Activated CD4-positive, alpha-beta memory T cell treated with anti-CD3 and anti-CD28 coated beads for 36 hours (primary cell): ENCODE measurements at regions of chr1 and their contacts with region 1.

Region 1: GRCh38 chr1:205227584-205228006 is at the start of gene TMCC2:
- DNase-seq: peak; percentile 88
- H3K4me3 Mint-ChIP-seq: peak within 1 kb of the TSS; percentile 84
- H3K27ac Mint-ChIP-seq: no peak within 1 kb of the TSS
- H3K4me1 Mint-ChIP-seq: peaks cover 34% of the 10 kb centered on the region
- H3K27me3 Mint-ChIP-seq: peaks cover 10% of the 10 kb centered on the region
- total RNA-seq, gene TMCC2: 9.8 to 10.1 TPM

Region 2: DNA sequence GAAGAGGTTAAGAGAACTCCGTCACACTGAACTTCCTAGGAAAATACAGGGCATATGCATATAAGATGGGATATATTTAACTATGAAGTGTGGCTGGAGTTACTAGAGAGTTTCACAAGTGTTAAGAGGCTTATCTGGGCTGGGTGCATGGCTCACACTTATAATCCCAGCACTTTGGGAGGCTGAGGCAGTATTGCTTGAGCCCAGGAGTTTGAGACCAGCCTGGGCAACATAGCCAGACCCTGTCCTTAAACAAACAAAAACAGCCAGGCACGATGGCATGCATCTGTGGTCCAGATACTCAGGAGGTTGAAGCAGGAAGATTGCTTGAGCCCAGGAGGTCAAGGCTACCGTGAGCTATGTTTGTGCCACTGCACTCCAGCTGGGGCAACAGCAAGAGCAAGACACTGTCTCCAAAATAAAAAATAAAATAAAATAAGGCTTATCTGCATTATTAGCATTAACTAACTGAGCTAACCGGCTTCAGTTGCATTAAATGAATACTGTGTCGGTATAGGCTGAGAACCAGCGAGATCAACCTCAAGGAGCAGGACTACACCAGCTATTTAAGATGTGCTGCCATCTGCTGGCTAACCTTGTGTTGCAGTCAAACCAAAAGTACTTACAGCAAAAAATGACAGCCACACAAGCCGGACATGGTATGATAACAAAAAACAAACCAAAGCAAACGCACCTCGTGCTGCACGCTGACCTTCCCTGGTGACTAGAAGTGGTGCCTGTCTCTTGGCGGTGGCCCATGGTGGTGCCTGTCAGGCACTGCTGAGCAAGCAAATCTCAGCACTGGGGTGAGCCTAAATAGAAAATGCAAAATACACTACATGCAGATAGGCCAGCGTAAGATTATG is 86.1 kb before region 1 on chr1:
- CTCF ChIA-PET with region 1: interaction called, 14 read pairs
- POLR2A ChIA-PET with region 1: no interaction called
- intact Hi-C with region 1: no loop called
- DNase-seq: peak; percentile 83
- H3K4me3 Mint-ChIP-seq: no peak overlapping the region
- H3K27ac Mint-ChIP-seq: no peak overlapping the region
- H3K4me1 Mint-ChIP-seq: peaks cover 4% of the 10 kb centered on the region
- H3K27me3 Mint-ChIP-seq: no peaks in the 10 kb centered on the region

Region 3: GRCh38 chr1:205211169-205211838 is 16.3 kb before region 1 on chr1 and contains the start of gene DSTYK:
- CTCF ChIA-PET with region 1: interaction called, 8 read pairs
- POLR2A ChIA-PET with region 1: interaction called, 10 read pairs
- intact Hi-C with region 1: loop called (anchors 1 kb)
- DNase-seq: peak; percentile 96
- H3K4me3 Mint-ChIP-seq: peak within 1 kb of the TSS; percentile 92
- H3K27ac Mint-ChIP-seq: peak within 1 kb of the TSS; percentile 91
- H3K4me1 Mint-ChIP-seq: peaks cover 48% of the 10 kb centered on the region
- H3K27me3 Mint-ChIP-seq: no peaks in the 10 kb centered on the region
- total RNA-seq, gene DSTYK: 9.0 to 9.8 TPM

Region 4: GRCh38 chr1:205237526-205238484 is 10.2 kb after region 1 on chr1:
- CTCF ChIA-PET with region 1: interaction called, 39 read pairs
- POLR2A ChIA-PET with region 1: interaction called, 10 read pairs
- intact Hi-C with region 1: no loop called
- DNase-seq: peak; percentile 77
- H3K4me3 Mint-ChIP-seq: peak overlapping the region; percentile 50
- H3K27ac Mint-ChIP-seq: peak overlapping the region; percentile 92
- H3K4me1 Mint-ChIP-seq: peaks cover 41% of the 10 kb centered on the region
- H3K27me3 Mint-ChIP-seq: peaks cover 5% of the 10 kb centered on the region

Region 5: DNA sequence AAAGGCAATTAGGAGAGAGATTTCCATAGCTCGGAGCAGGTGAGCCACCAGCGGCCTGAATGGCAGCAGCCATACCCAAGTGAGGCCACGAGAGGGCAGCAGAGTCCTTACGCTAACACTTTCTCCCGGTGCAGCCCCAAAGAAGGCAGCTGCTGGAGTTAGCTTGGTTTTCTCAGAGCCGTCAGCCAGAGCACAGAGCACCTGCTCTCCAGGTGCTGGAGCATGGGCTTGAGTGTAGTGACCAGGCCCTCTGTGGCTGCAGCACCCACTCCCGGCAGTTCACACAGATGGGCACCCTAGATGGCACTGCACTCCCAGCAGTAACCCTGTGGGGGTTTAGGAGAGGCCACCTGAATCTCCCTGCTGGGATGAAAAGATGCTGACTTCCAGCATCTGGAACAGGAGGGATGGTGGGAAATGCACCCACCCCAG is 46.0 kb after region 1 on chr1:
- CTCF ChIA-PET with region 1: interaction called, 19 read pairs
- POLR2A ChIA-PET with region 1: no interaction called
- intact Hi-C with region 1: no loop called
- DNase-seq: peak; percentile 91
- H3K4me3 Mint-ChIP-seq: no peak overlapping the region
- H3K27ac Mint-ChIP-seq: no peak overlapping the region
- H3K4me1 Mint-ChIP-seq: peaks cover 30% of the 10 kb centered on the region
- H3K27me3 Mint-ChIP-seq: no peaks in the 10 kb centered on the region

Region 6: DNA sequence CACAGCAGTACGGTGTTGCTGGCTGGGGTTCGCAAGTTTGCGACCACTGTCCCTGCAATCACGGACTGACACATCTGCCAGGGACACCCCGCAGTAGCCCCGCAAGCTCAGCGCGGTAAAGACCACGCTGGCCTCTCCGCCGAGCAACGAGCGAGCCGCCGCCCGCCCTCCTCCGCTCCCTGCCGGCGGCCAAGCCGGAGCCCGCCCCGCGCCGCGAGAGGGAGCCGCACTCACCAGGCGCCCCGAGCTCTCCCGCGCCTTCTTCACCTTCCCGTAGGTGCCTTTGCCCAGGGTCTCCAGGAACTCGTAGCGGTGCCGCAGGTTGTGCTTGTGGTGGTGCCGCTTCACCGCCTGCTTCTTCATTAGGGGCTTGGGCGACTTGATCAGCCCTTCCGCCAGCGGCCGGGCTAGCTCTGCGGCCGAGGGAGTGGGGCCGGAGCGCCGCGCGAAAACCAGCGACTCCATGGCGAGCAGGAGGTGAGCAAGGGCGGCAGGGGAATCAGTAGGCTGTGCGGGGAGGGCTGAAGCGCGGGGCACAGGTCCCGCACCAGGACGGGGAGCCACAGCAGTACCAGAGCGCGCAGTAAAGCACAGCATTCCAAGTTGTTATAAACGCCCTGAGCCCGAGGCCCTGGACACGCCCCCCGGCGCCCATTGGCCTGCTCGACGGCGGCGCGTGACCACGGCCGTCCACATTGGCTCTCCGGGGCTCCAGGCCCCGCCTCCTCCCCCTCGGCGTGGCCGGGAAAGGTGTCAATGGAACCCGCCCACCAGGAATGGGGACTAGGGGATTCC is 93.8 kb after region 1 on chr1 and contains the start of gene NUAK2:
- CTCF ChIA-PET with region 1: interaction called, 30 read pairs
- POLR2A ChIA-PET with region 1: no interaction called
- intact Hi-C with region 1: loop called (anchors 2 kb)
- DNase-seq: peak; percentile 89
- H3K4me3 Mint-ChIP-seq: peak within 1 kb of the TSS; percentile 88
- H3K27ac Mint-ChIP-seq: peak within 1 kb of the TSS; percentile 72
- H3K4me1 Mint-ChIP-seq: peaks cover 60% of the 10 kb centered on the region
- H3K27me3 Mint-ChIP-seq: peaks cover 2% of the 10 kb centered on the region
- total RNA-seq, gene NUAK2: 4.4 to 4.5 TPM